Aorta (tissue), 5 donors: ENCODE measurements at regions of chr6 and their contacts with region 1.

Region 1: DNA sequence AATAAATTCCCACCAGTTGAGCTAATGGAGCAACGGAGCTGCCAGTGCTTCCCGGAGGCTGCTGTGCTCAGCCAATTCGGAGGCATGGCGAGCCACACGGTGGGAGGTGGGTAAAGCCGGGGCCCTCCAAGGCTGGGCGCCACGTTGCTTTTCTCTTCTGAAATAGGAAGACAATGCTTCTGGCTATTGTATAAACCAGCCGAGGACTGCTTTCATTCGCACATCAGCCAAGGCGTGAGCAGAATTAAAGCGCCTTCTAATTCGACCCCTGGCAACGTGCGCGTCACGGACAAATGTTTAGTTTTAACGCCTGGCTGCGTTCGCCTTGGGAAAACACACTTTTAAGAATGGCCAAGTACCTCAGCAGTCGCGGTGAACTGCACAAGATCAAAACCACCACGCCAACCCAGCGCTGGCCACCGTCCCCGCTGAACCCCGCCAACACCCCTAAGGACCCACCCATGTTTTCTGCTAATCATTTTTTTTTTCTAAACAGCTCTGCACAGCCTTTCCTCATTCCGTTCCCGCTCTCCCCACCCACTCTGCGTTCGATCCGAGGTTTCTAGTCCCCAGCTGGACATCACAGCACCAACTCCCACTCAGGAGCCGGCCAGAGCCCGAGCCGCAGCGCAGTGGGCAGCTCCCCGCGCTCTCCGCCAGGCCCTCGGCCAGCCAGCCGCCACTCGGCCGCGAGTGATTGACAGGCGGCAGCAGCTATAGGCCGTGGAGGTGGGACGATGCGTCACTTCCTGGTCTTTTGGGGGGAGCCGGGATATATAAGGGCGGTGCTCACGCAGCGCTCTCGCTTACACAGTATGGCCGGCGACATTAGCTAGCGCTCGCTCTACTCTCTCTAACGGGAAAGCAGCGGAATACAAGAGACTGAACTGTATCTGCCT is at the start of gene AMD1:
- DNase-seq: peak; percentile 98
- ATAC-seq: peak; percentile 94
- H3K4me3 ChIP-seq: peak within 1 kb of the TSS; percentile 72 to 94
- H3K27ac ChIP-seq: peak within 1 kb of the TSS; percentile 32 to 97
- H3K4me1 ChIP-seq: no peaks in the 10 kb centered on the region
- H3K27me3 ChIP-seq: no peaks in the 10 kb centered on the region
- total RNA-seq, gene AMD1: 37.8 to 55.1 TPM

Region 2: DNA sequence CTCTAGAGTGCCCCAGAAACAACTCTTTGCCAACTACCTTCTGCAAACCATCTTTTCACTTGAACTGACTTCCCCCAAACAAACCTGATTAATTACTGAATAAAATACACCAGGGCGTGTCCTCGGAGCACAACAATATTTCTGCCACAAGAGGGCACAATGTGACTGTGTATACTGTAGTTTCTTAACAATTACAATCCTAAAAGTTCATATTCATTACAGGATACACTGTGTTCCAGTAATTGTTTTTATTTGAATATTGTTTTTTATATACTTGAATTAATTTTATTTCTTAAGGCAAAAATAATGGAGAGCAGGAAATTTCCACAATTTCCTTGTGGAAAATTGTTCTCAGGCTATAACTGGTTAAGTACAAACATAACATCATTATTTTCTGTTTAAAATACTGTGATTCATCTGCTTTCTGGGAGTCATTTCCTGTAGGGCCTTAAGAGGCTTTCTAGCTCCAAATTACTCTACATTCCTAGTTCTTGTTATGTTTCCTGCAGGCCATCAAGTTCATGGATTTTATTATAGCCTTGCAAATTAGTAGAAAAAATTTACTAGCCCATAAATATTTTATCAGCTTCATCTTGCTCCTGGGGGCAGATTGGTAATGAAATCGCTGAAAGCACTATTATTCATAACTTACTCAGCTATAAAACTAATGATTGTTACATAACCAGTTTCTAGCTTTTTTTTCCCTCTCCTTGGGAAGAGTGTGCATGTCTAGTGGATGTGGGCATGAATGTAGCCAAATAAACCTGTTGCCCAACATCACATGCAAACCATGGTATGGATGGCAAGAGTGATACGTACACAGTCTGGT is 345.9 kb before region 1 on chr6:
- intact Hi-C with region 1: loop called in 1 of 2 experiments (anchors 10 kb)
- DNase-seq: no peak
- ATAC-seq: peak; percentile 89
- H3K4me3 ChIP-seq: no peak overlapping the region
- H3K27ac ChIP-seq: no peak overlapping the region
- H3K4me1 ChIP-seq: no peaks in the 10 kb centered on the region
- H3K27me3 ChIP-seq: no peaks in the 10 kb centered on the region

Region 3: GRCh38 chr6:110815217-110816109 is 58.8 kb before region 1 on chr6 and contains the start of gene CDK19:
- intact Hi-C with region 1: loop called (anchors 1 to 2 kb)
- DNase-seq: peak; percentile 99
- ATAC-seq: peak; percentile 97
- H3K4me3 ChIP-seq: peak within 1 kb of the TSS; percentile 71 to 80
- H3K27ac ChIP-seq: peak within 1 kb of the TSS; percentile 58 to 91
- H3K4me1 ChIP-seq: no peaks in the 10 kb centered on the region
- H3K27me3 ChIP-seq: no peaks in the 10 kb centered on the region
- total RNA-seq, gene CDK19: 19.5 to 22.4 TPM

Region 4: DNA sequence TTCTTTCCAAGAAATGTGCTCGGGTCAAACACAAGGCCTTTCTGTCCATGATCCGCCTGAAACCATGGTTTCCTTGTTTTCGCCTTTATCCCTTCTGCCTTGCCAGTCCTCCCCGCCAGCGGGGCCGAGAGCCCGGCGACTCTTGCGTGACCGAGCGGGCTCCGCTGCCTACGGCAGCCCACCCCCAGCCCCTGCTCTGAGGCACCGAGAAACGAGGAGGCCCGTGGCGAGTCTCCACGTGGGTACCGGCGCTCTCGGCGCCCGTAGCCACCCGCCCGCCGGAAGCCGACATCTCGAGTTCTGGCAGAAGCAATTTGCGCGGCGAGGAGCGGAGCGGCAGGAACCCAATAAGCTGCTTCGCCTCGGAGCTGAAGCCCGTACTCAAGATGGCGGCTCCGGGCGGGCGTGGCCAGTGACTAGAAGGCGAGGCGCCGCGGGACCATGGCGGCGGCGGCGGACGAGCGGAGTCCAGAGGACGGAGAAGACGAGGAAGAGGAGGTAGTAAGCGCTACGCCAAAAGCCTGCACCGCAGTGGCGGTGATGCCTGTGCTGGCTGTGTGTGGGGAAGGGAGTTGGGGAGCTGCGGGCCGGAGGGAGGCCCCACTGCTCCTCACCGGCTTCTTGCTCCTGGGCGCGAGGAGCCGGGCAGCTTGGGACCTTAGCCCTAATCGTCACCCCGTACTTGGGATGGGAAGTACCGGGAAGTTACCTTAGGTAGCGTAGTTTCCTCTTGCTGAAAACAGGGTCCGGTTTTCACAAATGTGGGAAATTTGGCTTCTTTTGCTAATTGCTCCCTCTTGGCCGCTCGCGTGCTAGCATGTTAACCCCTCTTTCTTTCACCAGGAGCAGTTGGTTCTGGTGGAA is 84.3 kb after region 1 on chr6 and contains the start of gene GTF3C6:
- intact Hi-C with region 1: loop called in 1 of 2 experiments (anchors 5 kb)
- DNase-seq: peak; percentile 96 to 97
- ATAC-seq: peak; percentile 99
- H3K4me3 ChIP-seq: peak within 1 kb of the TSS; percentile 51 to 73
- H3K27ac ChIP-seq: peak within 1 kb of the TSS; percentile 36 to 76
- H3K4me1 ChIP-seq: no peaks in the 10 kb centered on the region
- H3K27me3 ChIP-seq: no peaks in the 10 kb centered on the region
- total RNA-seq, gene GTF3C6: 43.0 to 46.6 TPM

Region 5: GRCh38 chr6:110981202-110981600 is 107.0 kb after region 1 on chr6:
- intact Hi-C with region 1: loop called in 1 of 2 experiments (anchors 10 kb)
- DNase-seq: no peak
- ATAC-seq: no peak
- H3K4me3 ChIP-seq: peak overlapping the region; percentile 28 to 98
- H3K27ac ChIP-seq: no peak overlapping the region
- H3K4me1 ChIP-seq: no peaks in the 10 kb centered on the region
- H3K27me3 ChIP-seq: no peaks in the 10 kb centered on the region

Region 6: GRCh38 chr6:111922454-111923297 is 1048.4 kb after region 1 on chr6:
- intact Hi-C with region 1: no loop called
- DNase-seq: no peak
- ATAC-seq: no peak
- H3K4me3 ChIP-seq: no peak overlapping the region
- H3K27ac ChIP-seq: no peak overlapping the region
- H3K4me1 ChIP-seq: no peaks in the 10 kb centered on the region
- H3K27me3 ChIP-seq: peaks cover 0 to 4% of the 10 kb centered on the region in 2 donors